ENCODE measurements at regions of chr7 and their contacts with region 1.

Region 1: GRCh38 chr7:139656387-139656786 is 121.4 kb downstream of the HIPK2 start:
- DNase-seq: peak; percentile 83
- H3K4me3 ChIP-seq: no peak overlapping the region
- H3K27ac ChIP-seq: peak overlapping the region; percentile 48
- H3K4me1 ChIP-seq: peaks cover 59% of the 10 kb centered on the region
- H3K27me3 ChIP-seq: no peaks in the 10 kb centered on the region
- CTCF ChIP-seq: no peak

Region 2: GRCh38 chr7:139680676-139681462 is 24.5 kb after region 1 on chr7:
- CTCF ChIA-PET with region 1: no interaction called
- dilution Hi-C with region 1: no loop called
- in situ Hi-C with region 1: no loop called
- intact Hi-C with region 1: loop called (anchors 1 kb)
- DNase-seq: peak; percentile 97
- H3K4me3 ChIP-seq: no peak overlapping the region
- H3K27ac ChIP-seq: peak overlapping the region; percentile 97
- H3K4me1 ChIP-seq: peaks cover 49% of the 10 kb centered on the region
- H3K27me3 ChIP-seq: no peaks in the 10 kb centered on the region
- CTCF ChIP-seq: no peak